B cell (primary cell): ENCODE measurements at regions of chr3 and their contacts with region 1.

Region 1: GRCh38 chr3:47781685-47782445 is at the start of gene SMARCC1:
- DNase-seq: peak; percentile 99
- ATAC-seq: peak; percentile 87
- H3K4me3 ChIP-seq: peak within 1 kb of the TSS; percentile 68 to 94 (median 78)
- H3K4me3 Mint-ChIP-seq: peak within 1 kb of the TSS; percentile 99
- H3K27ac ChIP-seq: peak within 1 kb of the TSS; percentile 91 to 96
- H3K27ac Mint-ChIP-seq: peak within 1 kb of the TSS; percentile 99
- H3K4me1 ChIP-seq: peaks cover 32 to 44% of the 10 kb centered on the region in 2 donors
- H3K4me1 Mint-ChIP-seq: peaks cover 39% of the 10 kb centered on the region
- H3K27me3 ChIP-seq: no peaks in the 10 kb centered on the region
- H3K27me3 Mint-ChIP-seq: no peaks in the 10 kb centered on the region
- CTCF ChIP-seq: no peak
- total RNA-seq, gene SMARCC1: 149 and 155 TPM in 2 replicates

Region 2: DNA sequence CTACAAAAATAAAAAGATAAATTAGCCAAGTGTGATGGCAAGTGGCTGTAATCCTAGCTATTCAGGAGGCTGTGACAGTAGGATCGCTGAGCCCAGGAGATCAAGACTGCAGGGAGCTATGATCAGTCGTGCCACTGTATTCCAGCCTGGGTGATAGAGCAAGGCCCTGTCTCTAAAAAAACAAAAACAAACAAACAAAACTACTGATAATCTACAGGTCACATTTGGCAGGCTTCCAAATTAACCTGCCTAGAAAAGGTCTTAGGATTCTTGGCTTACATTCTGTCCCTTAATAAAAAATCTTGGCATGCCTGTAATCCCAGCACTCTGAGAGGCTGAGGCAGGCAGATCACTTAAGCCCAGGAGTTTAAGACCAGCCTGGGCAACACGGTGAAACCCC is 584.6 kb before region 1 on chr3:
- CTCF ChIA-PET with region 1: no interaction called
- POLR2A ChIA-PET with region 1: no interaction called
- intact Hi-C with region 1: no loop called
- DNase-seq: no peak
- ATAC-seq: no peak
- H3K4me3 ChIP-seq: no peak overlapping the region
- H3K4me3 Mint-ChIP-seq: no peak overlapping the region
- H3K27ac ChIP-seq: no peak overlapping the region
- H3K27ac Mint-ChIP-seq: no peak overlapping the region
- H3K4me1 ChIP-seq: no peaks in the 10 kb centered on the region
- H3K4me1 Mint-ChIP-seq: no peaks in the 10 kb centered on the region
- H3K27me3 ChIP-seq: no peaks in the 10 kb centered on the region
- H3K27me3 Mint-ChIP-seq: no peaks in the 10 kb centered on the region
- CTCF ChIP-seq: no peak

Region 3: GRCh38 chr3:47282424-47283192 is 499.3 kb before region 1 on chr3 and contains the starts of genes KIF9 and KLHL18:
- CTCF ChIA-PET with region 1: no interaction called
- POLR2A ChIA-PET with region 1: no interaction called
- intact Hi-C with region 1: loop called (anchors 5 kb)
- DNase-seq: peak; percentile 100
- ATAC-seq: peak; percentile 85
- H3K4me3 ChIP-seq: peak within 1 kb of the TSS; percentile 74 to 98 (median 89)
- H3K4me3 Mint-ChIP-seq: peak within 1 kb of the TSS; percentile 99
- H3K27ac ChIP-seq: peak within 1 kb of the TSS; percentile 99
- H3K27ac Mint-ChIP-seq: peak within 1 kb of the TSS; percentile 100
- H3K4me1 ChIP-seq: peaks cover 33 to 49% of the 10 kb centered on the region in 2 donors
- H3K4me1 Mint-ChIP-seq: peaks cover 45% of the 10 kb centered on the region
- H3K27me3 ChIP-seq: no peaks in the 10 kb centered on the region
- H3K27me3 Mint-ChIP-seq: no peaks in the 10 kb centered on the region
- CTCF ChIP-seq: no peak
- total RNA-seq, gene KIF9: 1.3 and 3.0 TPM in 2 replicates
- total RNA-seq, gene KLHL18: 30.9 and 33.0 TPM in 2 replicates

Region 4: GRCh38 chr3:47617086-47618010 is 164.5 kb before region 1 on chr3:
- CTCF ChIA-PET with region 1: no interaction called
- POLR2A ChIA-PET with region 1: interaction called, 12 read pairs
- intact Hi-C with region 1: no loop called
- DNase-seq: no peak
- ATAC-seq: no peak
- H3K4me3 ChIP-seq: no peak overlapping the region
- H3K4me3 Mint-ChIP-seq: no peak overlapping the region
- H3K27ac ChIP-seq: no peak overlapping the region
- H3K27ac Mint-ChIP-seq: no peak overlapping the region
- H3K4me1 ChIP-seq: peaks cover 0 to 5% of the 10 kb centered on the region in 2 donors
- H3K4me1 Mint-ChIP-seq: no peaks in the 10 kb centered on the region
- H3K27me3 ChIP-seq: no peaks in the 10 kb centered on the region
- H3K27me3 Mint-ChIP-seq: no peaks in the 10 kb centered on the region
- CTCF ChIP-seq: no peak

Region 5: GRCh38 chr3:47731061-47731460 is 50.8 kb before region 1 on chr3:
- CTCF ChIA-PET with region 1: no interaction called
- POLR2A ChIA-PET with region 1: no interaction called
- intact Hi-C with region 1: loop called (anchors 10 kb)
- DNase-seq: no peak
- ATAC-seq: no peak
- H3K4me3 ChIP-seq: no peak overlapping the region
- H3K4me3 Mint-ChIP-seq: no peak overlapping the region
- H3K27ac ChIP-seq: no peak overlapping the region
- H3K27ac Mint-ChIP-seq: no peak overlapping the region
- H3K4me1 ChIP-seq: peaks cover 0 to 4% of the 10 kb centered on the region in 2 donors
- H3K4me1 Mint-ChIP-seq: peaks cover 7% of the 10 kb centered on the region
- H3K27me3 ChIP-seq: no peaks in the 10 kb centered on the region
- H3K27me3 Mint-ChIP-seq: no peaks in the 10 kb centered on the region
- CTCF ChIP-seq: no peak